ENCODE measurements at regions of chr2 and their contacts with region 1.

Region 1: DNA sequence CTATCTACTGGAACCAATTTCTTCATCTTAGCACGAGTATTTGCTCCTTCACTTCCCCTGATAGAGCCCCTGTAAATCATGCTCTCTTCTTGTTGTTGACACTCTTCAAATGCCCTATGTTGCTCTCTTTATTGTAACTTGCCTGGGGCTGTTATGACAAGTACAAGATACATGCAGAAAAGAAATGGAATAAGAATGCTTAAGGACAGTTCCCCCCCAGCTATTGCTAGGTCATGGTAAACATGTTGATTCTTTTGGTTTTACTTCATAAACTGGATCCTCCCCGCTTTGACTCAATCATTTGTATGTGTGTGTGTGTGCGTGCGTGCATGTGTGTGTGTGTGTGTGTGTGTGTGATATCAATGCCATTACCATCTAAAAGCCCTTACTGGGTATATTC is 368.5 kb upstream of the CNTNAP5 start:
- DNase-seq: no peak
- ATAC-seq: no peak
- H3K4me3 ChIP-seq: no peak overlapping the region
- H3K4me3 Mint-ChIP-seq: no peak overlapping the region
- H3K27ac ChIP-seq: no peak overlapping the region
- H3K27ac Mint-ChIP-seq: no peak overlapping the region
- H3K4me1 ChIP-seq: no peaks in the 10 kb centered on the region
- H3K4me1 Mint-ChIP-seq: no peaks in the 10 kb centered on the region
- H3K27me3 ChIP-seq: no peaks in the 10 kb centered on the region
- H3K27me3 Mint-ChIP-seq: no peaks in the 10 kb centered on the region
- CTCF ChIP-seq: no peak

Region 2: GRCh38 chr2:122255924-122256323 is 1400.7 kb before region 1 on chr2:
- CTCF ChIA-PET with region 1: no interaction called
- POLR2A ChIA-PET with region 1: no interaction called
- intact Hi-C with region 1: no loop called
- DNase-seq: no peak
- ATAC-seq: no peak
- H3K4me3 ChIP-seq: no peak overlapping the region
- H3K4me3 Mint-ChIP-seq: no peak overlapping the region
- H3K27ac ChIP-seq: no peak overlapping the region
- H3K27ac Mint-ChIP-seq: no peak overlapping the region
- H3K4me1 ChIP-seq: no peaks in the 10 kb centered on the region
- H3K4me1 Mint-ChIP-seq: no peaks in the 10 kb centered on the region
- H3K27me3 ChIP-seq: no peaks in the 10 kb centered on the region
- H3K27me3 Mint-ChIP-seq: no peaks in the 10 kb centered on the region
- CTCF ChIP-seq: no peak

Region 3: GRCh38 chr2:123596621-123597020 is 60.0 kb before region 1 on chr2:
- CTCF ChIA-PET with region 1: no interaction called
- POLR2A ChIA-PET with region 1: no interaction called
- intact Hi-C with region 1: loop called in 1 of 2 experiments (anchors 2 kb)
- DNase-seq: no peak
- ATAC-seq: no peak
- H3K4me3 ChIP-seq: no peak overlapping the region
- H3K4me3 Mint-ChIP-seq: no peak overlapping the region
- H3K27ac ChIP-seq: no peak overlapping the region
- H3K27ac Mint-ChIP-seq: no peak overlapping the region
- H3K4me1 ChIP-seq: no peaks in the 10 kb centered on the region
- H3K4me1 Mint-ChIP-seq: no peaks in the 10 kb centered on the region
- H3K27me3 ChIP-seq: no peaks in the 10 kb centered on the region
- H3K27me3 Mint-ChIP-seq: no peaks in the 10 kb centered on the region
- CTCF ChIP-seq: no peak

Region 4: GRCh38 chr2:123762221-123762620 is 105.6 kb after region 1 on chr2:
- CTCF ChIA-PET with region 1: no interaction called
- POLR2A ChIA-PET with region 1: no interaction called
- intact Hi-C with region 1: no loop called
- DNase-seq: no peak
- ATAC-seq: no peak
- H3K4me3 ChIP-seq: no peak overlapping the region
- H3K4me3 Mint-ChIP-seq: no peak overlapping the region
- H3K27ac ChIP-seq: no peak overlapping the region
- H3K27ac Mint-ChIP-seq: no peak overlapping the region
- H3K4me1 ChIP-seq: no peaks in the 10 kb centered on the region
- H3K4me1 Mint-ChIP-seq: no peaks in the 10 kb centered on the region
- H3K27me3 ChIP-seq: no peaks in the 10 kb centered on the region
- H3K27me3 Mint-ChIP-seq: no peaks in the 10 kb centered on the region
- CTCF ChIP-seq: no peak